Activated CD4-positive, alpha-beta memory T cell treated with anti-CD3 and anti-CD28 coated beads for 36 hours (primary cell): ENCODE measurements at regions of chr22 and their contacts with region 1.

Region 1: DNA sequence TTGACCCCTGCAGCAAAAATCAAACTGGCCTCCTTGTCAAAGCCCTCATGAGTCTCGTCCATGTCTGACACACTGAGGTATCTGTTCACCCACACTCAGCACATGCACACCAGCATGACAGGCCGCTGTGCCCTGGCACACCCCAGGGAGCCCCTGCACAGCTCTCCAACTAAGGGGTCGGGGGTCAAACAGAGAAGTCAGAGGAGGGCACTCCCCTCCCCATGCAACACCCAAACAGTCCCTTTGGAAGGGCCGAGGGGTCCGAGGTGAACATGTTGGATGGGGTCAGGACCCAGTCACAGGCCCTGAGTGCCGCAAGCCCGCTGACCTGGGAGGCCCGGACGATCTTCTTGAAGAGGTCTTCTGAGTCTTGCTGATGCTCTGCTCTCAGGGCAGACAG is 14.6 kb downstream of the SUN2 start:
- DNase-seq: no peak
- H3K4me3 Mint-ChIP-seq: no peak overlapping the region
- H3K27ac Mint-ChIP-seq: peak overlapping the region; percentile 51
- H3K4me1 Mint-ChIP-seq: peaks cover 26% of the 10 kb centered on the region
- H3K27me3 Mint-ChIP-seq: no peaks in the 10 kb centered on the region

Region 2: GRCh38 chr22:38461414-38462081 is 279.6 kb before region 1 on chr22:
- CTCF ChIA-PET with region 1: no interaction called
- POLR2A ChIA-PET with region 1: no interaction called
- intact Hi-C with region 1: no loop called
- DNase-seq: peak; percentile 78
- H3K4me3 Mint-ChIP-seq: no peak overlapping the region
- H3K27ac Mint-ChIP-seq: no peak overlapping the region
- H3K4me1 Mint-ChIP-seq: peaks cover 1% of the 10 kb centered on the region
- H3K27me3 Mint-ChIP-seq: peaks cover 64% of the 10 kb centered on the region

Region 3: DNA sequence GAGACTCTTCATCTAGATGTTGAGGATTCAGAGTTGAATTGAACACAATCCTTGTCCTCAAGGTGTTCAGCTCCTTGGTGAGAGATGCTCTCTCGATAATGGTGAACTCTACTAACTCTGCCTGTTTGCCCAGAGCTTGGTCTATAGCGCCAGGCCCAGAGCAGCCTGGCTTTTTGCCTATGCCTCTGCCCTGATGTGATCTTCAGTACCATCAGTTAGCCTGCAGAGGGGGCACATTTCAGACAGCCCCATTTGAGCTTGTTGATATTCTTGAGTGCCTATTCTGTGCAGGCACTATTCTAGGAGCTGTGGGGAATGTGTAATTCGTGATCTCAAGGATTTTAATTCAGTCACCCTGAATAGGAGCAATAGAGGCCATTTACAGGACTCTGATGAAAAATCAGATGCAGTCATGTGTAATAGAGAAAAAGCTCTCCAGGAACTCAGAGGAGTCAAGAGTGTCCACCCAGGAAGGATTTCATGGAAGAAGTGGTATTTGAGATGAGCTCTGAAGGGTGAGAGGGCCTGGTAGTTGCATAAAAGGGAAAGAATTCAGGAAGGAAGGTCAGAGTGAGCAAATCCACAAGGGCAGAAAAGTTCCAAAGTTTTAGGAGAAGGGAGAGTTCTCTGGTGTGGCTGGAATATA is 16.1 kb before region 1 on chr22:
- CTCF ChIA-PET with region 1: interaction called, 14 read pairs
- POLR2A ChIA-PET with region 1: interaction called, 3 read pairs
- intact Hi-C with region 1: no loop called
- DNase-seq: no peak
- H3K4me3 Mint-ChIP-seq: no peak overlapping the region
- H3K27ac Mint-ChIP-seq: peak overlapping the region; percentile 1
- H3K4me1 Mint-ChIP-seq: no peaks in the 10 kb centered on the region
- H3K27me3 Mint-ChIP-seq: no peaks in the 10 kb centered on the region

Region 4: DNA sequence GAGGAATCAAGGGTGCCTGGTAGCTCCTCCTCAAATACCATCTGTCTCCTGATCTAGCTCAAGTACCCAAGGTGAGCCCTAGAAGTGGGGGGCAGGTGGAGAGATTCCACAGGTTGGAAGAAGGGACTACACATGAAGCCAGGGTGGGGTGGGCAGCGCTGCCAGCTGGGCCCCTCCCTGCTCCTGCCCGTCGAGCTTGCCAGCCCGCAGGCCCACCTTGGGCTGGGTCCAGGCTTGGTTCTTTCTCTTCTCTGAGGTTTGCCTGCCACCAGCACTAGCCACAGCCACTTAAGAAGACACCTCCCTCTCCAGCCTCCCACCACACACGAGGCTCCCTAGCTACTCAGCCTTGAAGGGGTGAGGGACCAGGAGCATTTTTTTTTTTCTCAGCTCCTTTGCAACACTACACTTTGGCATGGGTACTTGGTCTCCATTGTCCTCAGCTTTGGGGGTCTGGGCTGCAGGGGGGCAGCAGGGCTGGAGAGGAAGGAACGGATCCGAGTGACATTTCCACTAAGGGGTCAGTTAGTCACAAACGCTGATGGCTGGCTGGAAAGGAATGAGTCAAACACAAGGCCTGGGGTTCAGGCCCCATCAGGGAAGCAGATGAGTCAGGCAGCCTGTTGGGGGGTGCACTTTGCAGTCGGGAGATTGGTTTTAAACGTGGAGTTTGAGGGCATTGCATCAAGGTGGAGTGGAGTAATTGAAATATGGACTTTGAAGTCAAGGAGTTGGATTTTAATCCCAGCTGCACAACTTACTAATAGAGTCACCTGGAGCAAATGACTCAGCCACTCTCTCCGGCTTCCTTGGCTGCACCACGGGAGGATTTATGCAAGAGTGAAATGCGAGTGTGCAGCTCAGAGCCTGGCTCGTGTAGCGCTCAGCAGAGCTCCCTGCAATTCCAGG is 110.0 kb after region 1 on chr22:
- CTCF ChIA-PET with region 1: no interaction called
- POLR2A ChIA-PET with region 1: no interaction called
- intact Hi-C with region 1: no loop called
- DNase-seq: no peak
- H3K4me3 Mint-ChIP-seq: no peak overlapping the region
- H3K27ac Mint-ChIP-seq: no peak overlapping the region
- H3K4me1 Mint-ChIP-seq: no peaks in the 10 kb centered on the region
- H3K27me3 Mint-ChIP-seq: peaks cover 5% of the 10 kb centered on the region